ENCODE measurements at regions of chr1 and their contacts with region 1.

Region 1: GRCh38 chr1:116605315-116605714 is 34.5 kb upstream of the CD58 start:
- DNase-seq: no peak
- H3K4me3 ChIP-seq: no peak overlapping the region
- H3K27ac ChIP-seq: no peak overlapping the region
- H3K4me1 ChIP-seq: no peaks in the 10 kb centered on the region
- H3K27me3 ChIP-seq: no peaks in the 10 kb centered on the region
- CTCF ChIP-seq: no peak
- POLR2A ChIP-seq: no peak

Region 2: DNA sequence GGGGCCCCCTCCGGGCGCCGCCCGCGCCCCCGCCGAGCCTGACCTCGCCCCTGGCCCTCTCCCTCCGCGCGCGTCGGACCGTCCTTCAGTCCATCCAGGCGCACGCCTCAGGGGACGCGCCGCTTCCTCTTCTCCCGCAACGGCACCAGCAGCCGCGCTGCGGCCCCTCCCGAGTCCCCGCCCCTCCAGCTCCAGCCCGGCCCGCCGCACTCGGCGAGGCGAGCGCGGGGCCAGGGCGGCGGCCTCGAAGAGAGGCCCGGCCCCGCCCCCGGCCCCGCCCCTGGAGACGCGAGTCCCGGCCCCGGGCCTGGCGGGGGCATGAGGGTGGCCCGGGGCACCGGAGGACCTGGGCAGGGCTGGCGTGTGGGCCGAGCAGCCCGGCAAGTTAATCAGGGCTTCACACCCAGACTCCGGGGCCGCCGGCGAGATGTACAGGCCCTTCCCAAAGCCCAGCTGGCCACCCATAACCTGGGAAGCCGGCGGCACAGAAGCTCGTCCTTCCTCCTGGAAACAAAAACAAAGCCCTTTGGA is 62.3 kb after region 1 on chr1 and contains the start of gene IGSF3:
- CTCF ChIA-PET with region 1: no interaction called
- POLR2A ChIA-PET with region 1: no interaction called
- dilution Hi-C with region 1: no loop called
- intact Hi-C with region 1: loop called (anchors 10 kb)
- DNase-seq: peak; percentile 32
- H3K4me3 ChIP-seq: peak within 1 kb of the TSS; percentile 44 to 59 (median 48)
- H3K27ac ChIP-seq: no peak within 1 kb of the TSS
- H3K4me1 ChIP-seq: peaks cover 2% of the 10 kb centered on the region
- H3K27me3 ChIP-seq: peaks cover 28 to 30% of the 10 kb centered on the region in 2 experiments
- CTCF ChIP-seq: no peak
- POLR2A ChIP-seq: no peak
- total RNA-seq, gene IGSF3: 0.76 and 2.2 TPM in 2 replicates

Measured in endothelial cell of umbilical vein (primary cell).